ENCODE measurements at regions of chr15 and their contacts with region 1.

Region 1: DNA sequence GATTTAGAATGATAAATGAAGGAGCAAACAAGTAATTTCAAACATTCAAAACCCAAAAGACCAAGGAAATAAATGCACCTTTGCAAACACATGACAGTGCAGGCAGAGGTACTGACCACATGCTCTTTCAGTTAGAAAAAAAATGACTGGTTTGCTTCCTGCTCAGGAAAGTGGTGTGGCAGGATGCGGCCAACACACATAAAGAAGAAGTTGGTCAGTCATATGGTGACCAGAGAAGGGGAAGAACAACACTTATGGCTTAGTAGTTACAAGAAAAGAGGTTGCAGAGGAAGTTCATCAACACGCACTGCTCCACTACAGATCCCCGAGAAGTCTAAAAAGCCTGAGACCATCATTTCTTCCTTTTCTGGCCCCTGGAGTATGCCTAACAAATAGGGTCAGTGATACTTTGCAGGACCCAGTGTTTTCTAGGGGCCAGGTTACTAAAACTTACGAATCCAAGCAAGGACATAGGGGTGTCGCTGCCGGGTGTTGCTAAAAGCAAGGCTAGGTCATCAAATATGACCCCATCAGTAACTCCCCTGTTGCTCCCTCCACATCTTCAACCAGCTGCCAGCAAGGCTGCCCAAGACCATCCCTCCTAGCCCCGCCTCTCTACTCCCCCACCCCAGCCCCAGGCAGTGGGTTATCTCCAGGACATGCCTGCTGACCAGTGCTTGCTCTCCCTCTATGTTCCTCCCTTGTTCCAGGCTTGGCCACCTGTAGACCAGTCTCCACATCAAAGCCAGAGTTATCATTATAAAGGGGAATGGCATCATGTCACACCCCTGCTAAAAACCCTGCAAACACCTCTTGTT is 11.2 kb downstream of the ATP8B4 start:
- DNase-seq: peak; percentile 89
- ATAC-seq: peak; percentile 76
- H3K4me3 Mint-ChIP-seq: peak overlapping the region; percentile 60
- H3K27ac Mint-ChIP-seq: peak overlapping the region; percentile 92
- H3K4me1 Mint-ChIP-seq: peaks cover 93% of the 10 kb centered on the region
- H3K27me3 Mint-ChIP-seq: no peaks in the 10 kb centered on the region

Region 2: DNA sequence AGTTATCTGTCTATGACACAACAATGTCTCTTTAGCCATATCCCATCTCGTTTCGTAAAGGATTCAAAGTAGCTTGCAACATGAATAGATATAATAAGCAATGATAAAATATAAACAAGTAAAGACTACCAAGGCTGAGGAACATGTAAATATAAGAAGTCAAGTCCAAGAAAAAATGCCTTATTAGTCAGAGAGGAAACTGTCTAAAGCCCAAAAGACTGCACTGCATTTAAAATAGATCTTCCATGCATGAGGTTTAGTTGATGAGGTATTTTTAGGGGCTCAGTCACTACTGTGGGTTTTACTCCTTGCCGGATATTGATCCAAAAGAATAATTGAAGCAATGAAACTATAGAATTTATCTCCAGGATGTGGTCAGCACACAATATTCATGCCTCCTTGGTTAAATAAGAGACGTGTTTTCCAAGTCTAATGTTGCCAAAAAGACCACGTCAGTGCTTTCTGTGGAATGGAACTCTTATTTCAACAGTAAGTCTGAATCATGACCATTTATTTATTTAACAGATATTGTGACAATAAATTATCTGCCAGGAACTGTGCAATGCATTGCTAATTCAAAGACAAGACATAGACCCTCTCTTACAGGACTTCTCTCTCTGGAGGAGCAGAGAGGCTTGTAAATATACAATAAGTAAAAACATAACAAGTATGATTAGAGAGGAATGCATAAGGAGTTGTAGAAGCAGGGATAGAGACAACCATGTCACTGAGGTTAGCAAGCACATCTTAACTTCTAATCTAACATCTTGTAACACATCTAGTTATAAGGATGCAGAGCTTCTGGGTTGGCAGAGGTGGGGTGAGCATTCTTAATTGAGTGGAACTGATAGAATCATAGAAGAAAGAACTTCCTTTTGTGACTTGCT is 259.6 kb before region 1 on chr15:
- CTCF ChIA-PET with region 1: no interaction called
- DNase-seq: no peak
- ATAC-seq: no peak
- H3K4me3 Mint-ChIP-seq: no peak overlapping the region
- H3K27ac Mint-ChIP-seq: no peak overlapping the region
- H3K4me1 Mint-ChIP-seq: no peaks in the 10 kb centered on the region
- H3K27me3 Mint-ChIP-seq: no peaks in the 10 kb centered on the region

Region 3: GRCh38 chr15:50066192-50066591 is 41.6 kb before region 1 on chr15:
- CTCF ChIA-PET with region 1: no interaction called
- DNase-seq: peak; percentile 61
- ATAC-seq: peak; percentile 83
- H3K4me3 Mint-ChIP-seq: no peak overlapping the region
- H3K27ac Mint-ChIP-seq: peak overlapping the region; percentile 13
- H3K4me1 Mint-ChIP-seq: peaks cover 52% of the 10 kb centered on the region
- H3K27me3 Mint-ChIP-seq: no peaks in the 10 kb centered on the region

Region 4: GRCh38 chr15:50134520-50135024 is 26.8 kb after region 1 on chr15:
- CTCF ChIA-PET with region 1: interaction called, 10 read pairs
- DNase-seq: no peak
- ATAC-seq: peak; percentile 52
- H3K4me3 Mint-ChIP-seq: peak overlapping the region; percentile 25
- H3K27ac Mint-ChIP-seq: peak overlapping the region; percentile 90
- H3K4me1 Mint-ChIP-seq: peaks cover 55% of the 10 kb centered on the region
- H3K27me3 Mint-ChIP-seq: no peaks in the 10 kb centered on the region